Caco-2 (cell line): ENCODE measurements at regions of chr9 and their contacts with region 1.

Region 1: GRCh38 chr9:84997472-84997871 is 327.9 kb downstream of the NTRK2 start:
- DNase-seq: no peak
- H3K4me3 ChIP-seq: no peak overlapping the region
- H3K4me3 Mint-ChIP-seq: no peak overlapping the region
- H3K27ac Mint-ChIP-seq: no peak overlapping the region
- H3K4me1 ChIP-seq: no peaks in the 10 kb centered on the region
- H3K4me1 Mint-ChIP-seq: no peaks in the 10 kb centered on the region
- H3K27me3 ChIP-seq: no peaks in the 10 kb centered on the region
- H3K27me3 Mint-ChIP-seq: no peaks in the 10 kb centered on the region
- CTCF ChIP-seq: peak in 1 of 2 experiments; percentile 3

Region 2: GRCh38 chr9:85258823-85259370 is 261.4 kb after region 1 on chr9:
- CTCF ChIA-PET with region 1: no interaction called
- POLR2A ChIA-PET with region 1: no interaction called
- intact Hi-C with region 1: loop called (anchors 2 kb)
- DNase-seq: peak; percentile 42 to 45
- H3K4me3 ChIP-seq: no peak overlapping the region
- H3K4me3 Mint-ChIP-seq: no peak overlapping the region
- H3K27ac Mint-ChIP-seq: no peak overlapping the region
- H3K4me1 ChIP-seq: no peaks in the 10 kb centered on the region
- H3K4me1 Mint-ChIP-seq: peaks cover 6% of the 10 kb centered on the region
- H3K27me3 ChIP-seq: no peaks in the 10 kb centered on the region
- H3K27me3 Mint-ChIP-seq: peaks cover 12% of the 10 kb centered on the region
- CTCF ChIP-seq: peak; percentile 47 to 60